ENCODE measurements at regions of chr15 and their contacts with region 1.

Region 1: DNA sequence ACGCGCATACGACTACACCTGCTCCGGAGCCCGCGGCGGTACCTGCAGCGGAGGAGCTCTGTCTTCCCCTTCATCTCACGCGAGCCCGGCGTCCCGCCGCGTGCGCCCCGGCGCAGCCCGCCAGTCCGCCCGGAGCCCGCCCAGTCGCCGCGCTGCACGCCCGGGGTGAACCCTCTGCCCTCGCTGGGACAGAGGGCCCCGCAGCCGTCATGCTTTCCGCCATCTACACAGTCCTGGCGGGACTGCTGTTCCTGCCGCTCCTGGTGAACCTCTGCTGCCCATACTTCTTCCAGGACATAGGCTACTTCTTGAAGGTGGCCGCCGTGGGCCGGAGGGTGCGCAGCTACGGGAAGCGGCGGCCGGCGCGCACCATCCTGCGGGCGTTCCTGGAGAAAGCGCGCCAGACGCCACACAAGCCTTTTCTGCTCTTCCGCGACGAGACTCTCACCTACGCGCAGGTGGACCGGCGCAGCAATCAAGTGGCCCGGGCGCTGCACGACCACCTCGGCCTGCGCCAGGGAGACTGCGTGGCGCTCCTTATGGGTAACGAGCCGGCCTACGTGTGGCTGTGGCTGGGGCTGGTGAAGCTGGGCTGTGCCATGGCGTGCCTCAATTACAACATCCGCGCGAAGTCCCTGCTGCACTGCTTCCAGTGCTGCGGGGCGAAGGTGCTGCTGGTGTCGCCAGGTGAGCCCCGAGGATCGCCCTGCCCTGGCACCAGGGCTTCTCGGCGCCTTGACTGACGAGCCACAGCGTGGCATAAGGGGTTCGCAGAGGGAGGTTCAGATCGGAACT is 420 bp downstream of the SLC27A2 start:
- DNase-seq: no peak
- ATAC-seq: peak; percentile 65
- H3K4me3 ChIP-seq: peak overlapping the region; percentile 78
- H3K27ac ChIP-seq: no peak overlapping the region
- H3K4me1 ChIP-seq: peaks cover 12% of the 10 kb centered on the region; the same call in 1 of the 2 replicates
- H3K27me3 ChIP-seq: no peaks in the 10 kb centered on the region
- CTCF ChIP-seq: peak; percentile 26; the same call in 1 of the 2 replicates

Region 2: GRCh38 chr15:50046867-50047266 is 135.5 kb before region 1 on chr15:
- CTCF ChIA-PET with region 1: no interaction called
- POLR2A ChIA-PET with region 1: no interaction called
- intact Hi-C with region 1: no loop called
- DNase-seq: peak; percentile 39
- ATAC-seq: peak; percentile 17; the same call in 1 of the 2 replicates
- H3K4me3 ChIP-seq: no peak overlapping the region
- H3K27ac ChIP-seq: peak overlapping the region; percentile 53
- H3K4me1 ChIP-seq: peaks cover 15% of the 10 kb centered on the region
- H3K27me3 ChIP-seq: no peaks in the 10 kb centered on the region
- CTCF ChIP-seq: no peak

Region 3: GRCh38 chr15:50256188-50257041 is 74.0 kb after region 1 on chr15:
- CTCF ChIA-PET with region 1: no interaction called
- POLR2A ChIA-PET with region 1: no interaction called
- intact Hi-C with region 1: no loop called
- DNase-seq: peak; percentile 77
- ATAC-seq: peak; percentile 91
- H3K4me3 ChIP-seq: no peak overlapping the region
- H3K27ac ChIP-seq: peak overlapping the region; percentile 47
- H3K4me1 ChIP-seq: peaks cover 25% of the 10 kb centered on the region
- H3K27me3 ChIP-seq: no peaks in the 10 kb centered on the region
- CTCF ChIP-seq: no peak

Region 4: DNA sequence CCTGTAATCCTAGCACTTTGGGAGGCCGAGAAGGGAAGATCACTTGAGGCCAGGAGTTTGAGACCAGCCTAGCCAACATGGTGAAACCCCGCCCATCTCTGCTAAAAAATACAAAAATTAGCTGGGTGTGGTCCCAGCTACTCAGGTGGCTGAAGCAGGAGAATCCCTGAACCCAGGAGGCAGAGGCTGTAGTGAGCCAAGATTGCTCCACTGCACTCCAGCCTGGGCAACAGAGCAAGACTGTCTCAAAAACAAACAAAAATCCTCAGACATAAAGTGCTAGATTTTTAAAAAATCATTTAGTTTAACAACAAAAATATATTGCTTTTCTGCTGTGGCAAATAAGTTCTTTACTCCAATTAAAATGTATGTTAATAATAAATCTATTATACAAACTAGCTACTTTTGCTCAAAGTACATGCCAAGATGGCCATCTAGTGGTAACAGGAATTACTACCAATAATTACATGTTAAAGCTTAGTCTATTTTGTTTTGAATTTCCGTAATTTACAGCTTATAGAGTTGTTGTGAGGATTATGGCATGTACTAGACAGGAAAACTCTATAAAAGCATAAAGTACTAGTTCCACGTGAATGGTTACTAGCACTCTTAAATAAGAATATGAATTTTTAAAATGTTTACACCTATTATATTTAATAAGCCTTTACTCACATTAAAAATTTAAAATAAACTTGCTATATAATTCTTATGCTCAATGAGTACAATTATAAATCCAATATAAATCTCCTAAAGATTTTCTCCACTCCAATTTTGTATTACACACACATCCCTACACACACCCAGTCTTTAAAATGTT is 133.6 kb after region 1 on chr15:
- CTCF ChIA-PET with region 1: interaction called, 8 read pairs
- POLR2A ChIA-PET with region 1: no interaction called
- intact Hi-C with region 1: loop called (anchors 10 kb)
- DNase-seq: peak; percentile 62
- ATAC-seq: peak; percentile 35; the same call in 1 of the 2 replicates
- H3K4me3 ChIP-seq: no peak overlapping the region
- H3K27ac ChIP-seq: no peak overlapping the region
- H3K4me1 ChIP-seq: no peaks in the 10 kb centered on the region
- H3K27me3 ChIP-seq: no peaks in the 10 kb centered on the region
- CTCF ChIP-seq: peak; percentile 68